CD8-positive, alpha-beta T cell (primary cell): ENCODE measurements at regions of chr17 and their contacts with region 1.

Region 1: GRCh38 chr17:7989781-7990655 is 12.4 kb upstream of the GUCY2D start:
- DNase-seq: peak; percentile 85 to 99 (median 92)
- ATAC-seq: peak; percentile 96
- H3K4me3 ChIP-seq: peak overlapping the region; percentile 47 to 61
- H3K4me3 Mint-ChIP-seq: peak overlapping the region; percentile 77
- H3K27ac ChIP-seq: peak overlapping the region; percentile 51 to 61
- H3K27ac Mint-ChIP-seq: peak overlapping the region; percentile 86
- H3K4me1 ChIP-seq: peaks cover 13% of the 10 kb centered on the region
- H3K4me1 Mint-ChIP-seq: peaks cover 21% of the 10 kb centered on the region
- H3K27me3 ChIP-seq: no peaks in the 10 kb centered on the region
- H3K27me3 Mint-ChIP-seq: peaks cover under 1% of the 10 kb centered on the region
- CTCF ChIP-seq: peak; percentile 85

Region 2: GRCh38 chr17:7740481-7741001 is 249.5 kb before region 1 on chr17:
- CTCF ChIA-PET with region 1: interaction called, 28 read pairs
- POLR2A ChIA-PET with region 1: no interaction called
- intact Hi-C with region 1: loop called (anchors 1 kb)
- DNase-seq: no peak
- ATAC-seq: no peak
- H3K4me3 ChIP-seq: no peak overlapping the region
- H3K4me3 Mint-ChIP-seq: no peak overlapping the region
- H3K27ac ChIP-seq: no peak overlapping the region
- H3K27ac Mint-ChIP-seq: no peak overlapping the region
- H3K4me1 ChIP-seq: no peaks in the 10 kb centered on the region
- H3K4me1 Mint-ChIP-seq: no peaks in the 10 kb centered on the region
- H3K27me3 ChIP-seq: peaks cover 0 to 6% of the 10 kb centered on the region in 2 experiments
- H3K27me3 Mint-ChIP-seq: peaks cover 28% of the 10 kb centered on the region
- CTCF ChIP-seq: no peak

Region 3: DNA sequence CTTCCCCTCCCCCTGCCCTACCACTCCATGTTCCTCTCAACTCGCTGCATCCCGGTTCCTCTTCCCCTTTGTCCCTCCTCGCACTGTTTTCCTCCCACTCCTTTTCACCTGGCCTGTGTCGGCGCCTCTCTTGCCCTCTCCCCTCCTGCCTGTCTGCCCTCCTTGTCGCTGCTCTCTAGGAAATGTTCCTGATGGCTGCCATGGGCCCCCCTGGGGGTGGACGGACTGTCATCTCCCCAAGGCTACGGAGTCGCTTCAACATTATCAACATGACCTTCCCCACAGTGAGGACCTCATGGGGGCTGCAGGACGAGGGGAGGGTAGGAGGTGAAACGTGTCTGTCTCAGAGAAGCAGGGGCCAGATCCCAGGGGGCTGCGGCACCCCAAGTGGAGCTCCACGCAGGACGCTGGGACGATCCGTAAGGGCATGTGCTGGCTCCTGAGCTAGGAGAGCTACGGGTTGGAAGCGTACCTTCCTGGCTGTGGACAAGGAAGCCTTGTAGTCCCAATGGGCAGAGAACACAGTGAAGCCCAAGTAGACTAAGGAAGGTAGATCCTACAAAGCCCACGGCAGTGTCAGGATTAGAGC is 195.8 kb before region 1 on chr17:
- CTCF ChIA-PET with region 1: no interaction called
- POLR2A ChIA-PET with region 1: no interaction called
- intact Hi-C with region 1: no loop called
- DNase-seq: no peak
- ATAC-seq: no peak
- H3K4me3 ChIP-seq: no peak overlapping the region
- H3K4me3 Mint-ChIP-seq: no peak overlapping the region
- H3K27ac ChIP-seq: no peak overlapping the region
- H3K27ac Mint-ChIP-seq: no peak overlapping the region
- H3K4me1 ChIP-seq: no peaks in the 10 kb centered on the region
- H3K4me1 Mint-ChIP-seq: no peaks in the 10 kb centered on the region
- H3K27me3 ChIP-seq: peaks cover 0 to 3% of the 10 kb centered on the region in 2 experiments
- H3K27me3 Mint-ChIP-seq: peaks cover 11% of the 10 kb centered on the region
- CTCF ChIP-seq: no peak

Region 4: GRCh38 chr17:7834962-7835813 is 154.8 kb before region 1 on chr17:
- CTCF ChIA-PET with region 1: interaction called, 10 read pairs
- POLR2A ChIA-PET with region 1: no interaction called
- intact Hi-C with region 1: no loop called
- DNase-seq: peak; percentile 75 to 98 (median 85)
- ATAC-seq: peak; percentile 54
- H3K4me3 ChIP-seq: peak overlapping the region; percentile 90 to 97
- H3K4me3 Mint-ChIP-seq: peak overlapping the region; percentile 96
- H3K27ac ChIP-seq: peak overlapping the region; percentile 99
- H3K27ac Mint-ChIP-seq: peak overlapping the region; percentile 99
- H3K4me1 ChIP-seq: peaks cover 45% of the 10 kb centered on the region
- H3K4me1 Mint-ChIP-seq: peaks cover 45% of the 10 kb centered on the region
- H3K27me3 ChIP-seq: no peaks in the 10 kb centered on the region
- H3K27me3 Mint-ChIP-seq: no peaks in the 10 kb centered on the region
- CTCF ChIP-seq: peak; percentile 69

Region 5: DNA sequence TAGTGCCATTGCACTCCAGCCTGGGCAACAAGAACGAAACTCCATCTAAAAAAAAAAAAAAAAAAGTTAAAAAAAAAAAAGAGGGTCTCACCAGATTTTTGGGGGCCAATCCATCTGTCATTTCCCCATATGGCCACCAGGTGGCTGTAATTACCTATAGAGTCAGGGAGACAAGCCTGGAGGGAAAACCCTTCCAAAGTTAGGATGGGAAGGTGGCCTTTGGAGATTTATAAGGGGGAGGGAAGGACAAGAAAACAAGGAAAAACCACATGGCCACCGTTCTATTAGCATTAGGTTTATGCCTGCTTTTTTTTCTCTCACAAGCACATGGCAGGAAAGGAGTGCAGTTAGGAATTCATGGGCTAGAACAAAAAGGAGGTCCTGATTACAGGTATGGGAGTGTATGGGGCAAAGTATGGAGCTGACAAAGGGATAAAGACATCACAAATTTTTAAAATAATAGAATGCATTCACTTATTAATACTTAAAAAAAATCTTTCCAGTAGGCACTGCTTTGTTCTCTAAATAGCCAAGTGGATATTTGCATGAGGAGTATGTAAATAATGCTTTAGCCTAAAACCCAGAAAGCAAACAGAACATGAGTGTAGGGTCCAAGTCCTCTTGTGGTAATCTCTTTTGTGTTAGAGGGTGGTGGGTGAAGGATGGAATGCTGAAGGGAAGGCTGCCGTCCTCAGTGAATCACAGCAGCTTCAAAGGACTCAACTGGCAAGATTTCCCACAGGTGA is 127.2 kb before region 1 on chr17:
- CTCF ChIA-PET with region 1: interaction called, 178 read pairs
- POLR2A ChIA-PET with region 1: interaction called, 8 read pairs
- intact Hi-C with region 1: loop called (anchors 1 kb)
- DNase-seq: peak in 7 of 9 experiments; percentile 19 to 78 (median 66)
- ATAC-seq: no peak
- H3K4me3 ChIP-seq: no peak overlapping the region
- H3K4me3 Mint-ChIP-seq: no peak overlapping the region
- H3K27ac ChIP-seq: no peak overlapping the region
- H3K27ac Mint-ChIP-seq: no peak overlapping the region
- H3K4me1 ChIP-seq: peaks cover 20% of the 10 kb centered on the region
- H3K4me1 Mint-ChIP-seq: peaks cover 17% of the 10 kb centered on the region
- H3K27me3 ChIP-seq: no peaks in the 10 kb centered on the region
- H3K27me3 Mint-ChIP-seq: no peaks in the 10 kb centered on the region
- CTCF ChIP-seq: peak; percentile 75

Region 6: DNA sequence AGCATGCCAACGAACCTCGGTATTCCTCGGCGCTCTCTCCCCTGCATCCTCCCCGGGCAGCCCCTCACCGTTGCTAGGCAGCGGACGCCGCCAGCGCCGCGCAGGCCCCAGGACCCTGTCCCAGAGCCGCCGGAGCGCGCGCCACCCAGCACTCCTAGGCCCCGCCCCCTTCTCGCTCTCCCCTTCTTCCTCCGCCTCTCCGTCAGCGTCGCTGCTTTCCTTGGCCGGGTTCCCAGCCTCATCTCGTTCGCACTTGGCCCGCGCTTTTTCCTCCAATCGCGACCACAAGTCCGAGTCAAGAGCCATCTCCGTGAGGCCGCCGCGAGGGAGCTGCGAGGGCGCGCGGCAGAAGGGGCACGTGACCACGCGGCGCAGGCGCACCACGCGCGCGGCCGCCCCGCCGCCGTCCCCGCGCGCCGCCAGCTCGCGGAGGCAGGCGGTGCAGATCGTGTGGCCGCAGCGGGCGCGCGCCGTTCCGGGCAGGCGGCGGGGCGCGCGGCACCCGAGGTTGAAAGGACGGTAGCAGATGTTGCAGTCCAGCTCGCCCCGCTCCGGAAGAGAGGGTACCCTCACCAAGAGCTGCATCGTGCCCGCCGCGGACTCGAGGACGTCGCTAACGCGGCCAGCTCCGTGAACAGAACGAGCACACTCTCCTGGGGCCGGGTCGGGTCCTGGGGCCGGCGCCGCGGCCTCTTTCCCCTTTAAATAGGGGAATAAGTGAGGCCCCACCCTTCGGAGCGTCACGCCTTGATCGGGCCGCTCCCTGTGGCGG is 74.2 kb before region 1 on chr17 and contains the start of gene RNF227:
- CTCF ChIA-PET with region 1: interaction called, 338 read pairs
- POLR2A ChIA-PET with region 1: interaction called, 36 read pairs
- intact Hi-C with region 1: loop called (anchors 1 kb)
- DNase-seq: peak; percentile 52 to 93 (median 80)
- ATAC-seq: peak; percentile 82
- H3K4me3 ChIP-seq: peak within 1 kb of the TSS; percentile 74 to 79
- H3K4me3 Mint-ChIP-seq: peak within 1 kb of the TSS; percentile 89
- H3K27ac ChIP-seq: peak within 1 kb of the TSS; percentile 67 to 80
- H3K27ac Mint-ChIP-seq: peak within 1 kb of the TSS; percentile 90
- H3K4me1 ChIP-seq: peaks cover 25% of the 10 kb centered on the region
- H3K4me1 Mint-ChIP-seq: peaks cover 28% of the 10 kb centered on the region
- H3K27me3 ChIP-seq: no peaks in the 10 kb centered on the region
- H3K27me3 Mint-ChIP-seq: no peaks in the 10 kb centered on the region
- CTCF ChIP-seq: no peak
- total RNA-seq, gene RNF227: 2.8 to 3.3 TPM

Region 7: DNA sequence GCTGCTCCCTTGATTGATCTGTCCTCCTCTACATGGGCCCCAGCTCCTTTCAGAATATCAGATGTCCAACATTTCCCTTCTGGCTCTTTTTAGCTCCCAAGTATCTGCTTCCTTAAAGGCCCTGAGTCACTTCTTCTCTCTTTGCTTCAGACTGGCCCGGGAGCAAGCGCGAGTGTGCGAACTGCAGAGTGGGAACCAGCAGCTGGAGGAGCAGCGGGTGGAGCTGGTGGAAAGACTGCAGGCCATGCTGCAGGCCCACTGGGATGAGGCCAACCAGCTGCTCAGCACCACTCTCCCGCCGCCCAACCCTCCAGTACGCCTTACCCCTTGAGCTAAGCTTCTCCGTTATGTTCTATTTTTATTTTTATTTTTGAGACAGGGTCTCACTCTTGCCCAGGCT is 45.7 kb before region 1 on chr17:
- CTCF ChIA-PET with region 1: interaction called, 27 read pairs
- POLR2A ChIA-PET with region 1: no interaction called
- intact Hi-C with region 1: no loop called
- DNase-seq: no peak
- ATAC-seq: no peak
- H3K4me3 ChIP-seq: no peak overlapping the region
- H3K4me3 Mint-ChIP-seq: no peak overlapping the region
- H3K27ac ChIP-seq: no peak overlapping the region
- H3K27ac Mint-ChIP-seq: no peak overlapping the region
- H3K4me1 ChIP-seq: no peaks in the 10 kb centered on the region
- H3K4me1 Mint-ChIP-seq: no peaks in the 10 kb centered on the region
- H3K27me3 ChIP-seq: no peaks in the 10 kb centered on the region
- H3K27me3 Mint-ChIP-seq: no peaks in the 10 kb centered on the region
- CTCF ChIP-seq: no peak